K562 (cell line): ENCODE measurements at regions of chr5 and their contacts with region 1.

Region 1: GRCh38 chr5:36690041-36690961 is 83.9 kb downstream of the SLC1A3 start:
- DNase-seq: peak; percentile 74 to 82 (median 76)
- ATAC-seq: peak; percentile 95
- H3K4me3 ChIP-seq: no peak overlapping the region; the same call in 1 of the 2 replicates
- H3K27ac ChIP-seq: no peak overlapping the region
- H3K4me1 ChIP-seq: peaks cover 0 to 13% of the 10 kb centered on the region in 2 experiments; a peak in 2 of 5 replicates
- H3K27me3 ChIP-seq: peaks cover 4 to 29% of the 10 kb centered on the region in 2 experiments; a peak in 3 of 5 replicates
- CTCF ChIP-seq: peak; percentile 95 to 99 (median 97)
- EP300 ChIP-seq: no peak
- POLR2A ChIP-seq: no peak
- RAD21 ChIP-seq: peak; percentile 55 to 71

Region 2: GRCh38 chr5:36089989-36090564 is 600.2 kb before region 1 on chr5:
- CTCF ChIA-PET with region 1: no interaction called
- POLR2A ChIA-PET with region 1: no interaction called
- in situ Hi-C with region 1: loop called (anchors 10 kb)
- intact Hi-C with region 1: no loop called
- DNase-seq: peak in 1 of 4 experiments; percentile 53
- ATAC-seq: peak; percentile 97
- H3K4me3 ChIP-seq: no peak overlapping the region
- H3K27ac ChIP-seq: no peak overlapping the region
- H3K4me1 ChIP-seq: no peaks in the 10 kb centered on the region
- H3K27me3 ChIP-seq: no peaks in the 10 kb centered on the region
- CTCF ChIP-seq: peak; percentile 51 to 57 (median 56)
- EP300 ChIP-seq: no peak
- POLR2A ChIP-seq: no peak
- RAD21 ChIP-seq: peak in 1 of 2 experiments; percentile 34; a peak in 2 of 4 replicates

Region 3: DNA sequence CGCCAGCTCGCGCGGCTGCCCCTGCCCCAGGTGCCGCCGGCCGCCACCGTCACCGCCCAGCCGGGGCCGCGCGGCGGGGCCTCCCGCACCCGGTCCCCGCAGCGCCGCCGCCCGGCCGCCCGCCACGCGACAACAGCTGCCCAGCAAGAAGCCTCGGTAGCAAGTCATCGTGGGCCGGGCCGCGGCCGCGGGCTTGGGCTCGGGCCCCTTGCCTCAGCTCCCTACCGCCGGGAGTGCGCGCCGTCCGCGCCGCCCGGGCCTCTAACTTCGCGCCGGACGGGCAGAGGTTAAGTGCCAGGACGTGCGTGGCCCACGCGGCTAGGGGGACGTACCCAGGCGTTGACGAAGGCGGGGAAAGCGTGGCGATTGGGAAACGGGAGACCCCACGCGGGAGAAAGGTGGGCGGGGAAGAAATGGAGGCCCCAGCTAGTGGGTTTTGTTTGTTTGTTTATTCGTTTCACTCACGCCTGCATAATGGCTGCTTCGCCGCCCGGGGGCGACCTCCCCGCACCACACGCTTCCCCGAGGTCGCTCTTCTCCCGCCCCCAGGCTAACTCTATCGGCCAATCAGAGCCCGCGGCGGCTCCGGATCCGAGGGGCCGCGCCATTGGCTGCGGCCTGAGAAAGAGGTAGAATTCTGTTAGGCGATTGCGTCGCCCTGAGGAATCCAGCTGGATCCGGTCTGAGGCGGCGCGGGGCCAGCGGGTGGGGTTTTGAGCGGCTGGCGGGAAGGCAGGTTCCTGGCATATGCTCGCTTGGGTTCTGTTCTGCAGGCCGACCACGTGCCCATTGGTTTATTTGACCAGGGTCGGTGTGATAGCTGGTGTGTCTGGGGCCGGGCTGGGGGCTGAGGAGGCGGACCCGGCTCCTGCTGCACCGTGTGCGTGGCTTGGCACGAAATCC is 448.4 kb before region 1 on chr5 and contains the start of gene NADK2:
- CTCF ChIA-PET with region 1: no interaction called
- POLR2A ChIA-PET with region 1: no interaction called
- in situ Hi-C with region 1: no loop called
- intact Hi-C with region 1: loop called (anchors 10 kb)
- DNase-seq: peak; percentile 97 to 99 (median 98)
- ATAC-seq: peak; percentile 89
- H3K4me3 ChIP-seq: peak within 1 kb of the TSS; percentile 83
- H3K27ac ChIP-seq: peak within 1 kb of the TSS; percentile 99
- H3K4me1 ChIP-seq: peaks cover 20 to 39% of the 10 kb centered on the region in 2 experiments
- H3K27me3 ChIP-seq: no peaks in the 10 kb centered on the region
- CTCF ChIP-seq: peak; percentile 80 to 90 (median 87)
- EP300 ChIP-seq: peak; percentile 62
- POLR2A ChIP-seq: peak; percentile 82
- RAD21 ChIP-seq: peak; percentile 53 to 65
- polyA plus RNA-seq, gene NADK2: 10.6 to 11.0 TPM

Region 4: DNA sequence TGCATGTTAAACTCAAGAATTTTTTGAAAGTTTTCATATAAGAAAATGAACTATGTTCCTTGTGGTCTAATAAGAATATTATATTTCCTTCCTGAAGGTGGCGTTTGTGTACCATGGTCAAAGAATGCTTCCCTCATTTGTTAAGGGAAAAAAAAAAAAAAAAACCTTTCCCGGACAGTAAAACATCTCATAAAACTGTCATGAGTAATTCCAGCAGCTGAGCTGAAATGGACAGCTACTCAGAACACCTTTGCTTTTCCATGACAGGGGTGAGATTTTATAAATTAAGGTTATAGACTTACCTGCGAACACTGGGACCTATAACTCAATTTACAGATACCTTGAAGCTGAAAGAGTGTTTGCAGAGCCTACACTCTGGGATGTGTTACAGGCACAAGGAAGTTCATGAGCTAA is 275.4 kb before region 1 on chr5:
- CTCF ChIA-PET with region 1: interaction called, 6 read pairs
- POLR2A ChIA-PET with region 1: interaction called, 3 read pairs
- in situ Hi-C with region 1: loop called (anchors 5 kb)
- intact Hi-C with region 1: loop called (anchors 1 kb)
- DNase-seq: peak; percentile 32 to 58 (median 40)
- ATAC-seq: peak; percentile 57; the same call in 2 of the 3 replicates
- H3K4me3 ChIP-seq: no peak overlapping the region
- H3K27ac ChIP-seq: no peak overlapping the region
- H3K4me1 ChIP-seq: peaks cover 0 to 15% of the 10 kb centered on the region in 2 experiments; a peak in 2 of 5 replicates
- H3K27me3 ChIP-seq: no peaks in the 10 kb centered on the region
- CTCF ChIP-seq: peak; percentile 48 to 79 (median 52); a peak in 4 of 6 replicates
- EP300 ChIP-seq: no peak
- POLR2A ChIP-seq: no peak
- RAD21 ChIP-seq: peak; percentile 69 to 79

Region 5: DNA sequence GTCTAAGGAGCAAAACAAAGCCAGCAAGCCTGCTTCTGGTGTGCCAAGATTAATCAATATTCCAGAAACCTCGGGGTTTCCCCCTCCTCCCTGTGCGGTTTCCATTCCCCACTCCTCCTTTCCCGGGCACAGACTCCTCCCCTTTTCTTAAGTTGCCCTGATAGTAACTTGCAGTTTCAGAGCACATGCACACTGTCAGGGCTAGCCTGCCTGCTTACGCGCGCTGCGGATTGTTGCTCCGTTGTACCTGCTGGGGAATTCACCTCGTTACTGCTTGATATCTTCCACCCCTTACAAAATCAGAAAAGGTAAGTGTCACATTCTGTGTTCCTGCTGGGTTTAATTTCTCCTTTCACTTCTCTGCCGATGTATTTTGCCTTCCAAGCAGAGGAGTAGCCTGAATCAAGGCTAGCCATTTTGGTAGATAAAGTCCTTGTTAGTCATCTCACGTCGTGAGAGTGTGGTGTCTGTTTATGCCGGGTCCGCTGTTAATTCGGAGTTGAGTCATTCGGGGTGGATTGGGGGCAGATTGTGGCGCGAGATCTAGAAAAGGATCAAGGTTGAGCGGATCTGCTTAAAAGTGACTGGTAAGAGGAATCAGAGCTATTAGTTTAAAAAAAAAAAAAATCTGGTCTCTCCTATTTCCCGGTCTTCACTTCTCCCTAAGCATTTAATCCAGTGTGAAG is 83.7 kb before region 1 on chr5 and contains the start of gene SLC1A3:
- CTCF ChIA-PET with region 1: interaction called, 3 read pairs
- POLR2A ChIA-PET with region 1: no interaction called
- in situ Hi-C with region 1: no loop called
- intact Hi-C with region 1: loop called (anchors 5 kb)
- DNase-seq: peak in 1 of 4 experiments; percentile 10
- ATAC-seq: peak; percentile 78
- H3K4me3 ChIP-seq: no peak within 1 kb of the TSS
- H3K27ac ChIP-seq: no peak within 1 kb of the TSS
- H3K4me1 ChIP-seq: no peaks in the 10 kb centered on the region
- H3K27me3 ChIP-seq: peaks cover 11 to 12% of the 10 kb centered on the region in 2 experiments; a peak in 4 of 5 replicates
- CTCF ChIP-seq: no peak
- EP300 ChIP-seq: no peak
- POLR2A ChIP-seq: no peak
- RAD21 ChIP-seq: no peak
- polyA plus RNA-seq, gene SLC1A3: not detected